ENCODE measurements at regions of chr17 and their contacts with region 1.

Region 1: GRCh38 chr17:82037113-82037888 is at the start of gene DCXR:
- DNase-seq: peak; percentile 95 to 98 (median 97)
- H3K4me3 ChIP-seq: peak within 1 kb of the TSS in 3 of 4 donors; percentile 33 to 69 (median 55)
- H3K27ac ChIP-seq: peak within 1 kb of the TSS; percentile 90 to 99 (median 93)
- H3K4me1 ChIP-seq: peaks cover 14% of the 10 kb centered on the region in 2 donors
- H3K27me3 ChIP-seq: no peaks in the 10 kb centered on the region
- CTCF ChIP-seq: peak; percentile 21 to 85 (median 58)
- POLR2A ChIP-seq: peak; percentile 73 to 91
- total RNA-seq, gene DCXR: 66.9 to 183 (median 107) TPM

Region 2: DNA sequence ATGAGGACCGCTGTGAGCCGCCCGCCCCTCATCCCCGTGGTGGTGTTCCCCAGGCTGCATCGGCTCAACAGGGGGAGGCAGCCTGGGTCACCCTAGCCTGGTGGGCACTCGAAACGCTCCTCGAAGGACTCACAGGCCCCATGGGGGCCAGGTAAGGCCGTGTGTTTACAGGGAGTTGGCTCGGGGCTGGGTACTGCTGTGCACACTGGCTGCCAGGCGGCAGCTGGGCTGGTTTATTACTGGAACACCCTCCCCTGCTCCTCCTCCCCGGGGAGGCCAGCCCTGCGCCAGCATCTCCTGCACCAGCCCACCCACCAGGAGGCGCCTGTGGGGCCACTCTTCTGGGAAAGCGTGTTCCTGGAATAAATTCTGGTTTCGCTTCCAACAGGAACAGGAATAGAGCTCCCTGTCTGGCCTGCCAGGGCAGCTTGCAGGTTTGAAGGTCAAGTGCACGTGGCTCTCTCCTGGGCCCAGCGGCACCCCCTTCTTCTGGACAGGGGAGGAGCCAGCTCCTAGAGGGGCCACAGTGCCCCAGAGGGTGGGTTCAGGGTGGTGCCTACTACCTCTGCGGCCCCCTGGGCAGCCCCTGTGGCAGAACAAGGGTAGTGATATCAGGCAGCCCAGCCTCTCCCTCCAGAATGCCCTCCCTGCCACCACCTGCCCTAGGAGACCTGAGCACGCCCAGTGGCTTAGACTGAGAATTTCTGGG is 215.5 kb before region 1 on chr17:
- intact Hi-C with region 1: no loop called
- DNase-seq: peak; percentile 88 to 97 (median 95)
- H3K4me3 ChIP-seq: no peak overlapping the region
- H3K27ac ChIP-seq: peak overlapping the region; percentile 77 to 93 (median 85)
- H3K4me1 ChIP-seq: peaks cover 14 to 15% of the 10 kb centered on the region in 2 donors
- H3K27me3 ChIP-seq: no peaks in the 10 kb centered on the region
- CTCF ChIP-seq: peak; percentile 63 to 89 (median 78)
- POLR2A ChIP-seq: no peak

Region 3: DNA sequence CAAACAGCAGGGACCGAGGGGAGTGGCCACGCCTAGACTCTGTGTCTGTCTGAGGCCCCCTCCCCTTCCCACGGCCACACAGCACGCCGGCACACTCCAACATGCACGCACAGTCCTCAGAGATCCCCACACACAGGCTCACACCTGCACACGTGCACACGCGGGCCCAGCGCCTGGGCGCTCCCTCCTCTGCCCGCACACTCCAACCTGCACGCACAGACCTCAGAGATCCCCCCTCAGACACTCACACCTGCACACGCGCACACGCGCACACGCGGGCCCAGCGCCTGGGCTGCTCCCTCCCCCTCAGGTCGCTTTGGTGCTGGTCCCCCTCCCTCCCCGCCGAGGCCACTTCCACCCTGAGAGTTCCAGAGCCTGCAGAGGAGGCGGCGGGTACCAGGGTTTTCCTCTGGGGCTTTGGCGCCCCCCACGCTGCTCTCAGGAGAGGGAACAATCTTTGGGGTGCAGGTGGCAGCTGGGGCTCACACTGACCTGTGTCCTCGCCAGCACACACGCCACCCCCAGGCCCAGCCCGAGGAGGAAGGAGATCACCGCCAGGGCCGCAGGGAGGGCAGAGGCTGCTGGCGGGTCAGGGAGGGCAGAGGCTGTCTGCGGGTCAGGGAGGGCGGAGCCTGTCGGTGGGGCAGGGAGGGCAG is 278.5 kb after region 1 on chr17:
- intact Hi-C with region 1: loop called in 1 of 2 experiments (anchors 10 kb)
- DNase-seq: no peak
- H3K4me3 ChIP-seq: no peak overlapping the region
- H3K27ac ChIP-seq: no peak overlapping the region
- H3K4me1 ChIP-seq: no peaks in the 10 kb centered on the region
- H3K27me3 ChIP-seq: peaks cover 5% of the 10 kb centered on the region
- CTCF ChIP-seq: no peak
- POLR2A ChIP-seq: no peak

Measured in adrenal gland (tissue), 19 donors.